CD8-positive, alpha-beta T cell (primary cell): ENCODE measurements at regions of chr21 and their contacts with region 1.

Region 1: GRCh38 chr21:22456241-22456640 is 1458.0 kb downstream of the NCAM2 start:
- DNase-seq: no peak
- ATAC-seq: no peak
- H3K4me3 ChIP-seq: no peak overlapping the region
- H3K4me3 Mint-ChIP-seq: no peak overlapping the region
- H3K27ac ChIP-seq: no peak overlapping the region
- H3K27ac Mint-ChIP-seq: no peak overlapping the region
- H3K4me1 ChIP-seq: no peaks in the 10 kb centered on the region
- H3K4me1 Mint-ChIP-seq: no peaks in the 10 kb centered on the region
- H3K27me3 ChIP-seq: no peaks in the 10 kb centered on the region
- H3K27me3 Mint-ChIP-seq: no peaks in the 10 kb centered on the region
- CTCF ChIP-seq: no peak

Region 2: GRCh38 chr21:22421416-22422180 is 34.6 kb before region 1 on chr21:
- CTCF ChIA-PET with region 1: no interaction called
- POLR2A ChIA-PET with region 1: no interaction called
- intact Hi-C with region 1: loop called in 1 of 2 experiments (anchors 1 kb)
- DNase-seq: peak in 3 of 9 experiments; percentile 5 to 66 (median 28)
- ATAC-seq: peak; percentile 80
- H3K4me3 ChIP-seq: no peak overlapping the region
- H3K4me3 Mint-ChIP-seq: peak overlapping the region; percentile 73
- H3K27ac ChIP-seq: peak overlapping the region; percentile 17 to 56
- H3K27ac Mint-ChIP-seq: peak overlapping the region; percentile 79
- H3K4me1 ChIP-seq: peaks cover 6% of the 10 kb centered on the region
- H3K4me1 Mint-ChIP-seq: peaks cover 12% of the 10 kb centered on the region
- H3K27me3 ChIP-seq: no peaks in the 10 kb centered on the region
- H3K27me3 Mint-ChIP-seq: no peaks in the 10 kb centered on the region
- CTCF ChIP-seq: no peak

Region 3: GRCh38 chr21:22444990-22445389 is 11.3 kb before region 1 on chr21:
- CTCF ChIA-PET with region 1: no interaction called
- POLR2A ChIA-PET with region 1: no interaction called
- intact Hi-C with region 1: no loop called
- DNase-seq: no peak
- ATAC-seq: no peak
- H3K4me3 ChIP-seq: no peak overlapping the region
- H3K4me3 Mint-ChIP-seq: no peak overlapping the region
- H3K27ac ChIP-seq: no peak overlapping the region
- H3K27ac Mint-ChIP-seq: no peak overlapping the region
- H3K4me1 ChIP-seq: no peaks in the 10 kb centered on the region
- H3K4me1 Mint-ChIP-seq: no peaks in the 10 kb centered on the region
- H3K27me3 ChIP-seq: no peaks in the 10 kb centered on the region
- H3K27me3 Mint-ChIP-seq: no peaks in the 10 kb centered on the region
- CTCF ChIP-seq: no peak

Region 4: DNA sequence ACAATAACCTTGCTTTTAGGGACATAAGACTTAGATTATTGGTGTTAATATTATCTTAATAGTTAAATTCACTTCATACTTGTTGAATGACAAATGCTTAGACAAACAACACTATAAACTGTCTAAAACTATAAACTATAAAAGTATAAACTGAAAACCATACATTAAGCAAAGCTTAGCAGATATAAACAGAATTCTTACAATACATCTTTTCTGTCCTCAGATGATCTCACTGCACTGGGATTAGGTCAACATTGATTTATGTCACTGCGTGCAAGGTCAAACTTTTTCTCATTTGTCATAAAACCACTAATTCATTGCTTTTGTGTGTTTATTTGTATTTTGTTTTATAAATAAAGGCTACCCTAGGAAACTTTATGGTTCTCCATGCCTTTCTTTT is 33.8 kb after region 1 on chr21:
- CTCF ChIA-PET with region 1: no interaction called
- POLR2A ChIA-PET with region 1: no interaction called
- intact Hi-C with region 1: no loop called
- DNase-seq: no peak
- ATAC-seq: no peak
- H3K4me3 ChIP-seq: no peak overlapping the region
- H3K4me3 Mint-ChIP-seq: no peak overlapping the region
- H3K27ac ChIP-seq: no peak overlapping the region
- H3K27ac Mint-ChIP-seq: no peak overlapping the region
- H3K4me1 ChIP-seq: no peaks in the 10 kb centered on the region
- H3K4me1 Mint-ChIP-seq: no peaks in the 10 kb centered on the region
- H3K27me3 ChIP-seq: no peaks in the 10 kb centered on the region
- H3K27me3 Mint-ChIP-seq: no peaks in the 10 kb centered on the region
- CTCF ChIP-seq: no peak